ENCODE measurements at regions of chr11 and their contacts with region 1.

Region 1: DNA sequence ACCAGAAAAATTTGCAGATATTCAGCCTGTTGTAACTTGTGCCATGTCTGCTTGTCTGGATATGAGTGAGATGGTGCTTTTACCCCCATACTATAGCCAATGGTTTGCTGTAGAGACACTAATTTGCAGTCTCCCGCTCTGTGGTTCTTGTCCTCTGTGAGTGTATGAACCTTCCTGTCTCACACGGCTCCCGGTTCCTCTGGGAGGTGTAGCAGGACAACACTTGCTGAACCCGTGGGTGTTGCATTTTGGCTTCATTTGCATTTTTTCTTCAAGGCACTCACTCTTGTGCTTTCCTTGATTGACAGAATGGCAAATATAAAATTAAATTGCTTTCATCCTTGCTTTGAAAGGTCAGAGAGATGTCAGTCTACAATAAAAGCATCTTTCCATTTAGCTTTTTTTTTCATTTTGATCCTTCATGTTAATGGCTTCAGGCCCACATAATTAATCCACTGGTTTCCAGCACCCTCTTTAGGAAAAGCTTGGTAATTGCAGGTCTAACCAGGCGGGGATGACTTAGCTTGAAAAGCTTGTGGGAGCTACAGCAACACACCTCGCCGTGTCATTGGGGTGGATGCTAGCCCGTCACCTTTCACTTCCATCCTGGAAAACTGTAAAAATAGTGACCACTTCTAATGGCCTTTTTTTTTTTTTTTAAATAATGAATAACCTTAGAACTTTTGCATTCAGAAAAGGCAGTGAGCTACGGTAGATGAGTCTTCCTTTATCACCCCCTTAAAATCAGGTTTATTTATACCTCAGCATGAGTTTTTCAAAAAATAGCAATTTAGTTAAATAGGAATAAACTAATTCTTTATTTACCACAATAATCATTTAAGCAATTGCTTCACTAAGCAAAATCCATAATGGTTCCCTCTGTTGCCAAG is 27.4 kb upstream of the ST14 start:
- DNase-seq: peak; percentile 55
- H3K4me3 Mint-ChIP-seq: no peak overlapping the region
- H3K27ac Mint-ChIP-seq: no peak overlapping the region
- H3K4me1 Mint-ChIP-seq: no peaks in the 10 kb centered on the region
- H3K27me3 Mint-ChIP-seq: no peaks in the 10 kb centered on the region

Region 2: DNA sequence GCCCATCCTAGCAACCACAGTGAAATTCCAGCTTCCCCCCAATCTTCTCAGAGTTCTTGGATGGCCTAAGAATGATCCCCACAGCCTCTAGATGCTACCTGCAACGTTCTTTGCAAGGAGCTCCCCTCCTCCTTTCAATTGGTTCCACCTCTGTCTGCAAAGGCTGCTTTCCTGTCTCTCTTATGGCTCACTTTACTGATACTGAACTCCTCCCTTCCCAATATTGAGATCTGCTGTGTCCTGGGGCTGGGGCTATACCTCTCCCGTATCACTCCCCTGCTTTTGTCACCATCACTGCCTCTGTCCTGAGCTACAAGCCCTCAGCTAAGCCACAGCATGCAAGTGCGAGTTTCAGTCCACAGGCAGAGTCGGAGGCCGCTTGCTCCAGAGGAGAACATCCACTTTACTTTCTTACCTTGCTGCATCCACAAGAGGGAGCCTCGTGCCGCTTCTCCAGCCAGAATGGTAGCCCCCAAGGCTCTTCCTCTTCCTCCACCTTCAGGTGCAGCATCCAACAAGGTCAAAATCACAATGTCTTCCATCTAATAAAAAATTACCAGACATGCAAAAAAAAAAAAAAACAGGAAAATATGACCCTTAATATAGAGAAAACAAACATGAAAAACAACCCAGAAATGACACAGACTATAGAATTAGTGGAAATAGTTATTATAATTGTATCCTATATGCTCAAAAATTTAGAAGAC is 365.2 kb before region 1 on chr11:
- CTCF ChIA-PET with region 1: no interaction called
- POLR2A ChIA-PET with region 1: no interaction called
- intact Hi-C with region 1: loop called (anchors 5 kb)
- DNase-seq: peak; percentile 41
- H3K4me3 Mint-ChIP-seq: no peak overlapping the region
- H3K27ac Mint-ChIP-seq: no peak overlapping the region
- H3K4me1 Mint-ChIP-seq: peaks cover 6% of the 10 kb centered on the region
- H3K27me3 Mint-ChIP-seq: peaks cover 3% of the 10 kb centered on the region

Region 3: GRCh38 chr11:129881570-129882170 is 250.5 kb before region 1 on chr11:
- CTCF ChIA-PET with region 1: interaction called, 17 read pairs
- POLR2A ChIA-PET with region 1: no interaction called
- intact Hi-C with region 1: no loop called
- DNase-seq: peak; percentile 55
- H3K4me3 Mint-ChIP-seq: no peak overlapping the region
- H3K27ac Mint-ChIP-seq: no peak overlapping the region
- H3K4me1 Mint-ChIP-seq: no peaks in the 10 kb centered on the region
- H3K27me3 Mint-ChIP-seq: no peaks in the 10 kb centered on the region

Region 4: GRCh38 chr11:129922674-129923073 is 209.5 kb before region 1 on chr11:
- CTCF ChIA-PET with region 1: interaction called, 212 read pairs
- POLR2A ChIA-PET with region 1: interaction called, 4 read pairs
- intact Hi-C with region 1: loop called (anchors 1 kb)
- DNase-seq: no peak
- H3K4me3 Mint-ChIP-seq: no peak overlapping the region
- H3K27ac Mint-ChIP-seq: no peak overlapping the region
- H3K4me1 Mint-ChIP-seq: peaks cover 6% of the 10 kb centered on the region
- H3K27me3 Mint-ChIP-seq: no peaks in the 10 kb centered on the region

Region 5: DNA sequence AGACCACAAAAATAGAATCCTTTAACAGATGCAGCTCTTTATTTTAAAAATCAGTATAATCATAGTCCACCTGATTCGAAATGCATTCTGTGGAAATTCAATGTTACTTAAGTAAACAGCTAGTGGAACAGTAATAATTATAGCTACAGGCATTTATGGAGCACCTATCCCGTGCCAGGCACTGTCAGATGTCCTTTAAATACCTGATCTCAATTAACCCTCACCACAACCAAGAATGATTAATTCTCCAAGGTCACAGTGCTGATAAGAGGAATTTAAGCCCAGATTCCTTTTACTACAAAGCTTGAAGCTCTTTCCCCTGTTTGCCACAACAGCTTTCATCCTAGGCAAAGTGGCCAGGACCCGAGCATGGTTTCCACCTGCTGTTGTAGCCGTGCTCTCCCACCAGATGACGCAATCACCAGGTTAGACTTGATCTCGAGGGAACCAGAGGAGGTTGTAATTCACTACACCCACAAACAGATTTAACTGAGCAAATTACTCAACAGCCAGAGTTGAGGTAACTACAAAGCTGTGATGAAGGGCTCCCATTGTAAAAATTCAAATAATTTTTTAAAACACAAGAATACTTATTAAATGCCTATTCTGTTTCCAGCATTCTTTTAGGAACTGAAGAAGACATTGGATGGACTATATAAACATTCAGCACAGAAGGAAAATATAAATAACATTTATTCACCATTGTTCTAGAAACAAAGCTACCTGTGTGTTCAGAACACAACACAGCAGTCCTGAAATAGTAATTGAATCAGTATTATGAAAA is 139.9 kb before region 1 on chr11:
- CTCF ChIA-PET with region 1: interaction called, 36 read pairs
- POLR2A ChIA-PET with region 1: no interaction called
- intact Hi-C with region 1: no loop called
- DNase-seq: peak; percentile 61
- H3K4me3 Mint-ChIP-seq: no peak overlapping the region
- H3K27ac Mint-ChIP-seq: peak overlapping the region; percentile 4
- H3K4me1 Mint-ChIP-seq: peaks cover 5% of the 10 kb centered on the region
- H3K27me3 Mint-ChIP-seq: no peaks in the 10 kb centered on the region

Region 6: GRCh38 chr11:130061987-130062386 is 70.2 kb before region 1 on chr11:
- CTCF ChIA-PET with region 1: no interaction called
- POLR2A ChIA-PET with region 1: no interaction called
- intact Hi-C with region 1: no loop called
- DNase-seq: no peak
- H3K4me3 Mint-ChIP-seq: no peak overlapping the region
- H3K27ac Mint-ChIP-seq: no peak overlapping the region
- H3K4me1 Mint-ChIP-seq: no peaks in the 10 kb centered on the region
- H3K27me3 Mint-ChIP-seq: peaks cover 10% of the 10 kb centered on the region